Esophagus squamous epithelium (tissue), 5 donors: ENCODE measurements at regions of chr10 and their contacts with region 1.

Region 1: DNA sequence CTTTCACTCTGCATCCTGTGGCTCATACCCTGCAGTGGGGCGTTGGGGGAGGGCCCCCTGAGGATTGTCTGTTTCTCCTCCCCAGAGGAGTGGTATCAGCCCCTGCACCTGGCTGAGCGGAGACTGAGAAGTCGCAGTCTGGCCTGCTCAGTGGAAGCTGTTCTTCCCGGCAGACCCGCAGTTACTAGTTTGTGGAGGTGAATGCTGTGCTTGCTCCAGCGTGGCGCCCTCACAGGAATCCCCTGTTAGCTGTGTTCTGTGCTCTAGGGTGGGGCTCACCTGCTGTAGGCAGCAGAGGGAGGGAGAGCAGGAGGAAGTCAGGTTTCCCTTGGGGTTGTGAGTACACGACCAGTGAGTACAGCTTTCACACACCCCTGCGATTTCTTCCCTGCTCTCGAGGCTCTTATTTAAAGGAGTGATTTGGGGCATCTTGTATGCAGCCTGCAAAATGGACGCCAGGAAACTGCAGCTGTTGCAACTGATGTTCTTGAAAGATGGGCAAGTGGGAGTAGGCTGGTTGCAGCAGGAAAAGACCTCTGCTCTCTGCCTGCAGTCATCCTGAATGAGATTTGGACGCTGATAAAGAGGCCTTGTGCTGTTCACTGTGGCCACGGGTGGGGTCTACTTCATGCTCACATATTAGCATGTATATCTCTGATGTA is 66.4 kb downstream of the HK1 start:
- DNase-seq: no peak
- H3K4me3 ChIP-seq: no peak overlapping the region
- H3K27ac ChIP-seq: peak overlapping the region; percentile 7 to 89 (median 44)
- H3K4me1 ChIP-seq: peaks cover 60 to 99% (median 65%) of the 10 kb centered on the region in 3 donors
- H3K27me3 ChIP-seq: no peaks in the 10 kb centered on the region
- CTCF ChIP-seq: no peak
- POLR2A ChIP-seq: no peak

Region 2: DNA sequence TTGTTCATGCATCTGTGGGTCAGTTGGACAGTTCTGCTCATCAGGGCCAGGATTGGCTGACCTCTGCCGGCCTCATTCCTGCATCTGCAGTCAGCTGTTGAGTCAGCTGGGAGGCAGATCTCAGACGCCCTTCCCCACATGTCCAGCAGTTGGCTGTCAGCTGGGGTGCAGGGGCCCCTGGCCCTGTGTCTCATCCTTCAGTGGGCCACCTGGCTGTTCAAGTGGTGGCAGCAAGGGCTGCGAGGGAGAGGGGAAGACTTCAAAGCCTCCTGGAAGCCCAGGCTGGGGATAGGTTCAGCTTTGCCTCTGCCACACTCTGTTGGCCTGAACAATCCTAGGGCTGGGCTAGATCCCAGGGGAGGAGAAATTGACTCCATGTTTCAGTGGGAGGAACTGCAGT is 38.8 kb after region 1 on chr10:
- intact Hi-C with region 1: loop called (anchors 5 kb)
- DNase-seq: no peak
- H3K4me3 ChIP-seq: no peak overlapping the region
- H3K27ac ChIP-seq: peak overlapping the region; percentile 77 to 94 (median 86)
- H3K4me1 ChIP-seq: peaks cover 32 to 71% (median 41%) of the 10 kb centered on the region in 3 donors
- H3K27me3 ChIP-seq: no peaks in the 10 kb centered on the region
- CTCF ChIP-seq: peak in 1 of 6 experiments; percentile 29
- POLR2A ChIP-seq: no peak